ENCODE measurements at regions of chr18 and their contacts with region 1.

Region 1: DNA sequence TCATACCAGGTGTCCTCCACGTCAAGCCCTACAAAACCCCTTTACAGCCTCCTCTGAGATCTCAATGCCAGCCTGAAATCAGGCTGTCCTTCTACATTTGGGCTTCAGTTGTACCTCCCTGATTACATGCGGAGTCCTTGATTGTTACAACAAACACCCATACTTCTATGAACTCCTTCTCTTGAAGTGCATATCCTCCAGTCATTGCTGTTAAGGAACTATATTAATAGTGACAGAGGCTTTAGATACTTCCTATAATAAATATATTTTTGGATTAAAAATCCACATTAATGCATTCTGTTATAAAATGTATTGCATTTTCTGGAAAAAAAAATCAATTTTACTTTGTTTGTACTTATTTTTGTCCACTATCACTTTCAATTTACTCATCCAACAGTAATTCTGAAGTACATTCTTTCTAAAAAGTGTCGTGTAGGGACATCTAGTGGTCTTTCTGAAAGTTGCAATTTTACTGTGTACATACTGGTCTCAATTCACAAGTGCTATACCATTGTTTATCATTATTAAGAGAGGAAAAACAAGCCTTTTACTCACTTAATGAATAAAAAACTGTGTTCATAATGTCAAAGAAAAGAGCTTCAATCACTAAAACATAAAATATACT is 316.4 kb downstream of the DSEL start:
- DNase-seq: no peak
- H3K4me3 ChIP-seq: no peak overlapping the region
- H3K27ac ChIP-seq: no peak overlapping the region
- H3K4me1 ChIP-seq: no peaks in the 10 kb centered on the region
- H3K27me3 ChIP-seq: peaks cover 0 to 7% (median 0%) of the 10 kb centered on the region in 7 donors
- CTCF ChIP-seq: peak in 8 of 11 experiments; percentile 20 to 68 (median 52)
- POLR2A ChIP-seq: no peak

Region 2: GRCh38 chr18:66900837-66901236 is 299.3 kb before region 1 on chr18:
- intact Hi-C with region 1: no loop called
- DNase-seq: no peak
- H3K4me3 ChIP-seq: no peak overlapping the region
- H3K27ac ChIP-seq: no peak overlapping the region
- H3K4me1 ChIP-seq: no peaks in the 10 kb centered on the region
- H3K27me3 ChIP-seq: no peaks in the 10 kb centered on the region
- CTCF ChIP-seq: no peak
- POLR2A ChIP-seq: no peak

Region 3: DNA sequence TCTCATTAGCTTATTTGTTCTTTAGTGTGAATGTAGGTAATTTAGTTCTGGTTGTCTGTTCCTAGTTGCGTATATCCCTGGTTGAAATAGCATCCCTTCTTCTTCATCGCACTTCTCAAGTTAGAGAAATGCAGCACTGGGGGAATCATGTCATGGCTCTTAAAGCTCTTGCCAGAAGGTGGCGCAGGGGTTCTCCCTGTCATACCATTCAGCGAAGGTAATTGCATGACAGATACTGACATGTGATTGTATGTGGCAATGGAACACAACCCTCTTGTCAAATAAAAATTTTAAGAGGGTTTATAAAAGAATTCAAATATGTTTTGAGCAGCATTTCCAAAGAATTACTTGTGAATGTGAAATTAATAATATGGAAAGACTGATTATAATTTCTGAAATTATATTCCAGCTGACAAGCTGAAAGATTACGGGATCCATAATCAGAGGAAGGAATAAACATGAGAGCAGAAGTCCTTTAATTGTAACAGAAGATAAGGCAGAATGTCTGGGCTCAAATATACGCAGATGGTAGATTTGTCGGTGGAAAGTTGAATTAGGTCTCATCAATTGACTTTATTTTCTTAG is 95.3 kb before region 1 on chr18:
- intact Hi-C with region 1: loop called (anchors 5 kb)
- DNase-seq: no peak
- H3K4me3 ChIP-seq: no peak overlapping the region
- H3K27ac ChIP-seq: no peak overlapping the region
- H3K4me1 ChIP-seq: no peaks in the 10 kb centered on the region
- H3K27me3 ChIP-seq: no peaks in the 10 kb centered on the region
- CTCF ChIP-seq: peak in 7 of 11 experiments; percentile 30 to 56 (median 48)
- POLR2A ChIP-seq: no peak

Region 4: DNA sequence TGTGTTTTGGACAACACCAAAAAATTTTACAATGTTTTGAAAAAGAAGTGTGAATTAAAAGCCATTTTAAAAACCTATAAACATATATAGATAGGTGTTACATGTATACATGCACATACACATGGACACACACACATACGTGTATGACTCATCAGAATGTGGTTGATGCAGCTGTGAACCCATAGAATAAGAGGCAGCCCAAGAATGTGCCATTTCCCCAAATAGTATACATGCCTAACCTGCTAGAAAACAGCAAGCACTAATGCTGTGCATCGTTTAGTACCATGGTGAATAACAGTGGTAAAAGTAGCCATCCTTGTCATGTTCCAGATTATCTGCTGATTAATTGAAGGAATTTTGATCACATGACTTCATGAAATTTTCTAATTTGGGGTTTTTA is 167.4 kb after region 1 on chr18:
- intact Hi-C with region 1: no loop called
- DNase-seq: no peak
- H3K4me3 ChIP-seq: no peak overlapping the region
- H3K27ac ChIP-seq: no peak overlapping the region
- H3K4me1 ChIP-seq: no peaks in the 10 kb centered on the region
- H3K27me3 ChIP-seq: no peaks in the 10 kb centered on the region
- CTCF ChIP-seq: no peak
- POLR2A ChIP-seq: no peak